ENCODE measurements at regions of chr19 and their contacts with region 1.

Region 1: GRCh38 chr19:16118489-16119033 is 6.9 kb downstream of the RAB8A start:
- DNase-seq: no peak
- ATAC-seq: peak; percentile 56

Region 2: DNA sequence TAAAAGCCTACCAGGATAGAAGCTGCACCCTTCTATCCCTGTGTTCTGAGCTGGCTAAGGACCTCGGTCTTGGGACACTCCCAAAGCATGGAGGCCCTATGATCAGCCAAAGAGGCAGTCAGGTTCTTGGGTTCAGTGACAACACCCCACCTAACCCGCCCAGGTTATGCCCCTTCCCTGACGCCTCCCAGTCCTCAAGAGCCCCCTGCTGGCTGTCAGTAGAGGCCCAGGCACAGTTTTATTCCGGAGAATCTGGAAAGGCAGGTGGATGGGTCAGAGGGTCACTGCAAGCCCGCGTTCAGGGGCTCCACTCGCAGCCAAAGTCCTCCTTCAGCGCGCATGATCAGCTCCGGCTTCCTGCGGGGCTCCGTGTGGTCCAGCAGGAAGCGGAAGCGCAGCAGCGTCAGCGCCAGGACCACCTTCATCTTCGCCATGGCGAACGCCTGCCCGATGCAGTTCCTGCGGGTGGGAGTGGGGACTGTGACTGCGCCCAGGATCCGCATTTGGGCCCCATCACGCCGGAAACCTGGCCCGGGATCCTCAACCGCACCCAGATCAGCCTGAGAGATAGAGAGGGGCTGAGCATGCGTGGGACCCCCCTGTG is 358.5 kb before region 1 on chr19:
- intact Hi-C with region 1: no loop called
- DNase-seq: no peak
- ATAC-seq: no peak

Region 3: GRCh38 chr19:16070366-16070990 is 48.1 kb before region 1 on chr19:
- intact Hi-C with region 1: loop called (anchors 5 kb)
- DNase-seq: no peak
- ATAC-seq: peak; percentile 26

Measured in sciatic nerve (tissue), 2 donors.